Heart right ventricle (tissue), 16 donors: ENCODE measurements at regions of chr4 and their contacts with region 1.

Region 1: GRCh38 chr4:47686294-47686872 is 151.5 kb downstream of the CORIN start:
- DNase-seq: peak; percentile 29 to 33
- ATAC-seq: peak in 7 of 8 donors; percentile 57 to 89 (median 77)
- H3K4me3 ChIP-seq: no peak overlapping the region
- H3K27ac ChIP-seq: no peak overlapping the region
- H3K4me1 ChIP-seq: no peaks in the 10 kb centered on the region
- H3K27me3 ChIP-seq: peaks cover 0 to under 1% (median 0%) of the 10 kb centered on the region in 7 donors
- CTCF ChIP-seq: peak; percentile 38 to 81 (median 69)

Region 2: GRCh38 chr4:47836641-47837093 is 150.3 kb after region 1 on chr4:
- intact Hi-C with region 1: loop called in 6 of 10 experiments (anchors 5 kb)
- DNase-seq: peak; percentile 71 to 82
- ATAC-seq: peak; percentile 91 to 96 (median 94)
- H3K4me3 ChIP-seq: peak overlapping the region; percentile 32 to 77 (median 62)
- H3K27ac ChIP-seq: peak overlapping the region; percentile 6 to 86 (median 65)
- H3K4me1 ChIP-seq: peaks cover 2 to 44% (median 31%) of the 10 kb centered on the region in 9 donors
- H3K27me3 ChIP-seq: peaks cover 0 to 28% (median 4%) of the 10 kb centered on the region in 7 donors
- CTCF ChIP-seq: peak; percentile 35 to 84 (median 67)

Region 3: DNA sequence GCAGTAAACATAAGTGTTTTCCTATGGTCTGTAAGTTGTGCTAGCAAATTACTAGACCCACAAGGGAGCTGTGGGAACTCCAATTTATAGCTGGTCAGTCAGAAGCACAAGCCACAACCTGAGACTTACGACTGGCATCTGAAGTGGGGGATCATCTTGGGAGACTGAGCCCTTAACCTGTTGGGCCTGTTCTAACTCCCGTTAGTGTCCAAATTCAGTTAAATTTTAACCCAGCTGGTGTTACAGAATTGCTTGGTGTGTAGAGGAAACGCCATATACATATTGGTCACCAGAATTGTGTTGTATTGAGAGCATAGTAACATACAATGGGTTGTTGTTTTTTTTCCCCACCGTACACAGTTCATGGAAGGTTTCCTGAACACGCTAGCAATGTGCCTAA is 253.1 kb after region 1 on chr4:
- intact Hi-C with region 1: loop called in 7 of 10 experiments (anchors 5 to 10 kb)
- DNase-seq: no peak
- ATAC-seq: no peak
- H3K4me3 ChIP-seq: no peak overlapping the region
- H3K27ac ChIP-seq: no peak overlapping the region
- H3K4me1 ChIP-seq: no peaks in the 10 kb centered on the region
- H3K27me3 ChIP-seq: peaks cover 0 to 20% (median 4%) of the 10 kb centered on the region in 7 donors
- CTCF ChIP-seq: no peak